Transverse colon (tissue), 4 donors: ENCODE measurements at regions of chr12 and their contacts with region 1.

Region 1: GRCh38 chr12:49288412-49288853 is 6.5 kb upstream of the PRPH start:
- DNase-seq: peak; percentile 58
- H3K4me3 ChIP-seq: no peak overlapping the region
- H3K27ac ChIP-seq: no peak overlapping the region
- H3K4me1 ChIP-seq: peaks cover 0 to 7% (median 5%) of the 10 kb centered on the region in 4 donors
- H3K27me3 ChIP-seq: peaks cover 53% of the 10 kb centered on the region
- CTCF ChIP-seq: peak; percentile 79 to 87 (median 83)
- EP300 ChIP-seq: no peak
- POLR2A ChIP-seq: no peak

Region 2: DNA sequence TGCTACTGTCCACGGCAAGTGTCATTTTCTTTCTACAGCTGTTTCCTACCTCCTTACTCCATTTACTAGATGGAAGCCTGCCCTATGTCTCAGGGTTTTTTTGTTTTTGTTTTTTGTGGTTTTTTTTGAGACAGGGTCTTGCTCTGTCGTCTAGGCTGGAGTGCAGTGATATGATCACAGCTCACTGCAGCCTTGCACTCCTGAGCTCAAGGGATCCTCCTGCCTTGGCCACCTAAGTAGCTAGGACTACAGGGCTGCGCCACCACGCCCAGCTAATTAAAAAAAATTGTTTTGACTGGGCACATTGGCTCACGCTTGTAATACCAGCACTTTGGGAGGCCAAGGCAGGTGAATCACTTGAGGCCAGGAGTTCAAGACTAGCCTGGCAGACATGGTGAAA is 114.2 kb before region 1 on chr12:
- in situ Hi-C with region 1: no loop called
- intact Hi-C with region 1: no loop called
- DNase-seq: no peak
- H3K4me3 ChIP-seq: no peak overlapping the region
- H3K27ac ChIP-seq: no peak overlapping the region
- H3K4me1 ChIP-seq: no peaks in the 10 kb centered on the region
- H3K27me3 ChIP-seq: no peaks in the 10 kb centered on the region
- CTCF ChIP-seq: no peak
- EP300 ChIP-seq: no peak
- POLR2A ChIP-seq: no peak

Region 3: GRCh38 chr12:49260166-49260565 is 28.3 kb before region 1 on chr12:
- in situ Hi-C with region 1: no loop called
- intact Hi-C with region 1: no loop called
- DNase-seq: no peak
- H3K4me3 ChIP-seq: no peak overlapping the region
- H3K27ac ChIP-seq: no peak overlapping the region
- H3K4me1 ChIP-seq: peaks cover 0 to 10% (median 3%) of the 10 kb centered on the region in 4 donors
- H3K27me3 ChIP-seq: no peaks in the 10 kb centered on the region
- CTCF ChIP-seq: no peak
- EP300 ChIP-seq: no peak
- POLR2A ChIP-seq: no peak

Region 4: DNA sequence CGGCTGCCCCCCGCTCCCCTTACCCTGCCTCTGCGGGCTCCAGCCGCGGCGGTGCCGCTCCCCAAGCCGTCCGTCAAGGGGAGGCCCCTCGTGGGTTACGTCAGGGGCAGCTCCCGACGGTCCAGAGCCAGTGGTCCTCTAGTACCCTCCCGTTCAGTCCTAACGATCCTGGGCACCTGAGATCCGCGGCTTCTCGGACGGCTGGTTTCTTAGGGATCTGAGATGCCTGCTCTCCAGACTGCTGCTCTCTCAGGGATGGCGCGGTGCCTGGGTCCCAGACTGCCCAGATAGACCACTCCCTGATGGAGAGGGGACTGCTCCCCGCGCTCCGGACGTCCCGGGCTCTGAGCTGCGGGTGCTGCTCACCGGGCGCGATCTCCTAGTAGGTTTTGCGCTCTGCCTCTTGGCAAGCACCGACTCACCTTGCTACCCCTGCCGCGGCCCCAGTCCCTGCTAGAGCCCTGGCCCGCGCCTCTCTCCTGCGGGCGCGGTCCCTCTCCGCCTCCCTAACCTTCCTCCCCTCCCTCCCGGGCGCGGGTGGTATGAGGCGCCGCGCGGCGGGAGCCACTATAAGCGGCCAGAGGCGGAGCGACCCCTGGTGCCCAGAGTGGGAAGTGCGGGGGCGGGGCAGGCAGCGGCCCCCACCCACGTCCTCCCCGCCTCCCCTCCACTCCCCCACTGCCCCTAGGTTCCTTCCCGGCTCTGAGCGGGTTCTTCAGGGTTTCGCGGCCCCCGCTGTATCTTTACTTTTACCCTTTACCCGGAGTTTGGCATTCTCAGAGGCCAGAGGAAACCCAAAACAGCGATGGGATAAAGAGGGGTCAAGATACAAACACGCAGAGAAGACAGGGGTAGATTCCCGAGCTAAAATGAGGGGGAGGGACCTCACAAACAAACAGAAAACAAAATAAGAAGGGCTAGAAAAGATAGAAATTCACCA is 48.5 kb after region 1 on chr12 and contains the start of gene C1QL4:
- in situ Hi-C with region 1: loop called in 1 of 4 experiments (anchors 10 kb)
- intact Hi-C with region 1: loop called (anchors 5 kb)
- DNase-seq: peak; percentile 87
- H3K4me3 ChIP-seq: peak within 1 kb of the TSS in 2 of 4 donors; percentile 26 to 45
- H3K27ac ChIP-seq: no peak within 1 kb of the TSS
- H3K4me1 ChIP-seq: peaks cover 4 to 27% (median 17%) of the 10 kb centered on the region in 4 donors
- H3K27me3 ChIP-seq: peaks cover 79% of the 10 kb centered on the region
- CTCF ChIP-seq: peak; percentile 84 to 99 (median 99)
- EP300 ChIP-seq: no peak
- POLR2A ChIP-seq: no peak
- total RNA-seq, gene C1QL4: not detected

Region 5: DNA sequence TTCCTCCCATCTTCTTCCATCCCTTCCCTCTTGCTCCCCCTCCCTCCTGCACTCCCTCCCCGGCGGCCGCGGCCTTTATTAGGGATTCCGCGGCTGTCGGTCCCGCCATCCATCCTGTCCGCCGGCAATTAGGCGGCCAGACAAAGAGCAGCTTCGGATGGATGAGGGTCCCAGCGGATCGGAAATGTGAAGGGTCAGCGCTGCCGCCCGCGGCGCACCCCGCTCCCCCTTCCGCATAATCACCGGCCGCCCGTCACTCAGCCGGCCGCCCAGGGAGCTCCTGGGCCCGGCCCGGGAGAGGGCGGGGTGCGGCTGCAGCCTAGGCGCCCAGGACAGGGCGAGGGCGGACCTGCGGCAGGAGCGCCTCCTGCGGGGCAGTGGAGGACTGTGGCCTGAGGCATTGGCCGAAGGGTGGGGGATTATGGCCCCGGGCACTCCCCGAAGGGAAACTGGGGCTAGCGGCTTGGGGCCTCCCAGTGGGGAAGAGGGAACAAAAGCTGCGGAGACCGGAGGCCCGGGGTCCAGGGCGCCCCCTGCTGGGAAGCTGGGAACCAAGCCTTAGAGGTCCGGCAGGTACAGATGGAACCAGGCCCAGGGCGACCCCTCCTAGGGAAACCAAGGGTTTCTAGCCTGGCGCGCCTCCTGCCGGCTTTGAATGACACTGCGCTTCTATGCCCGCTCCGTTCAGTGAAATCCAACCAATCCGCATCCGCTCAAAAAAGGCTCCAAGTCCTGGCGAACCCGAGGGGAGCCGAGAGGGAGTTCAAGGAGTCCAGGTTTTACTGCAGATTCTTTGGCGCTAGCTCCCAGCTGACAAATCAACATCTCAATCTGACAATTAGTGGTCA is 53.9 kb after region 1 on chr12:
- in situ Hi-C with region 1: loop called in 1 of 4 experiments (anchors 10 kb)
- intact Hi-C with region 1: loop called (anchors 5 kb)
- DNase-seq: peak; percentile 88
- H3K4me3 ChIP-seq: peak overlapping the region in 3 of 4 donors; percentile 34 to 56 (median 42)
- H3K27ac ChIP-seq: peak overlapping the region in 1 of 4 donors; percentile 14
- H3K4me1 ChIP-seq: peaks cover 29 to 60% (median 46%) of the 10 kb centered on the region in 4 donors
- H3K27me3 ChIP-seq: peaks cover 77% of the 10 kb centered on the region
- CTCF ChIP-seq: peak; percentile 84 to 89 (median 86)
- EP300 ChIP-seq: no peak
- POLR2A ChIP-seq: no peak

Region 6: GRCh38 chr12:49821373-49822287 is 533.2 kb after region 1 on chr12:
- in situ Hi-C with region 1: no loop called
- intact Hi-C with region 1: no loop called
- DNase-seq: no peak
- H3K4me3 ChIP-seq: no peak overlapping the region
- H3K27ac ChIP-seq: no peak overlapping the region
- H3K4me1 ChIP-seq: peaks cover 9 to 42% (median 14%) of the 10 kb centered on the region in 4 donors
- H3K27me3 ChIP-seq: no peaks in the 10 kb centered on the region
- CTCF ChIP-seq: no peak
- EP300 ChIP-seq: no peak
- POLR2A ChIP-seq: no peak